ENCODE measurements at regions of chr1 and their contacts with region 1.

Region 1: GRCh38 chr1:178607718-178608408 is 95.0 kb downstream of the TEX35 start:
- DNase-seq: no peak
- H3K4me3 ChIP-seq: no peak overlapping the region
- H3K27ac ChIP-seq: peak overlapping the region; percentile 85
- H3K4me1 ChIP-seq: peaks cover 46% of the 10 kb centered on the region
- H3K27me3 ChIP-seq: no peaks in the 10 kb centered on the region
- CTCF ChIP-seq: no peak

Region 2: DNA sequence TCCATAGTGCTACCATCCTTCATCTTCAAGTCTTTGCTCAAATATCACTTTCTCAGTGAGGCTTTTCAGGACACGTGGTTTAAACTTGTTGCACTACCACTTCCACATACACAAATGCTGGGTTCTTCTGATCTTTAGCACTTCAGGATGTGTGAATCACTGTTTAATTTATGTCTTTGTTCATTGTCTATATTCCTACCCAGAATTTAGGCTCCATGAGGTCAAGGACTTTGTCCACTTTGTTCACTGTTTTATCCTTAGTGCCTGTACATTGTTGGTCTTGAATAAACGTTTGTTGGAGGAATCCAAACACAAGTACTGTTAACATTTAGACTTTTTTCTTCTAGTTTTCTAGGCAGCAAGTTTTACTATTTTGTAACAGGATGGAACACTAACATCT is 74.6 kb after region 1 on chr1:
- CTCF ChIA-PET with region 1: no interaction called
- dilution Hi-C with region 1: no loop called
- in situ Hi-C with region 1: no loop called
- intact Hi-C with region 1: loop called (anchors 2 kb)
- DNase-seq: peak; percentile 26
- H3K4me3 ChIP-seq: no peak overlapping the region
- H3K27ac ChIP-seq: no peak overlapping the region
- H3K4me1 ChIP-seq: peaks cover 40% of the 10 kb centered on the region
- H3K27me3 ChIP-seq: no peaks in the 10 kb centered on the region
- CTCF ChIP-seq: no peak

Region 3: DNA sequence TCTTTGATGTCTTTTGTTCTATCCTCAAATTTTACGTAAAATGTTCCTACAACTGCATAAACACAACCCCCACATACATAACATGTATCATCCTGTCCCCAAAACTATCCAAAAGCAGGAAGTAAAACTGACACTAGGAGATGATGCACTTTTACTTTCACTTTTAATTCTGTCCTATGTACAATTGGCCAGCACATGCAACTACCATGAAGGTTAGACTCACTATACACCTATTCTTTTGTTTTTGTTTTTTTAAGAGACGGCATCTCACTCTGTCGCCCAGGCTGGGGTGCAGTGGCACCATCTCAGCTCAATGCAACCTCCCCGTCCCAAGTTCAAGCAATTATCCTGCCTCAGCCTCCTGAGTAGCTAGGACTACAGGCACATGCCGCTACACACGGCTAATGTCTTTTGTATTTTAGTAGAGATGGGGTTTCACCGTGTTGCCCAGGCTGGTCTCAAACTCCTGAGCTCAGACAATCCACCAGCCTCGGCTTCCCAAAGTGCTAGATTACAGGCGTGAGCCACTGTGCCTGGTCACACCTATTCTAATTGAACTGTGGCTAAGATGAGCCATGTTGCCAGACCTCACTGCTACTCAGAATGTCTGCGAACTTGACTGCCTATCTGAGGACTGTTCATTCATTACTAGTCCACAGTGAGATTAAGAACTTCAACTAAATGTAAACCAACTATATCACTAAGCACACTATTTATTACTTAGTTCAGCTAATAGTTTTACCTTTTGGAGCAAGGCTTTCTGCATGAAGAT is 522.0 kb after region 1 on chr1:
- CTCF ChIA-PET with region 1: no interaction called
- dilution Hi-C with region 1: no loop called
- in situ Hi-C with region 1: no loop called
- intact Hi-C with region 1: no loop called
- DNase-seq: peak; percentile 42
- H3K4me3 ChIP-seq: no peak overlapping the region
- H3K27ac ChIP-seq: peak overlapping the region; percentile 11
- H3K4me1 ChIP-seq: peaks cover 39% of the 10 kb centered on the region
- H3K27me3 ChIP-seq: no peaks in the 10 kb centered on the region
- CTCF ChIP-seq: no peak